Heart right ventricle (tissue), 16 donors: ENCODE measurements at regions of chr15 and their contacts with region 1.

Region 1: GRCh38 chr15:36501063-36501678 is 78.3 kb upstream of the CDIN1 start:
- DNase-seq: peak in 1 of 2 donors; percentile 60
- ATAC-seq: peak; percentile 85 to 96 (median 92)
- H3K4me3 ChIP-seq: peak overlapping the region in 1 of 10 donors; percentile 3
- H3K27ac ChIP-seq: peak overlapping the region in 3 of 10 donors; percentile 0 to 21 (median 4)
- H3K4me1 ChIP-seq: peaks cover 0 to 41% (median 6%) of the 10 kb centered on the region in 9 donors
- H3K27me3 ChIP-seq: no peaks in the 10 kb centered on the region
- CTCF ChIP-seq: peak; percentile 44 to 89 (median 71)

Region 2: GRCh38 chr15:35751413-35752133 is 749.6 kb before region 1 on chr15:
- intact Hi-C with region 1: loop called in 2 of 10 experiments (anchors 10 kb)
- DNase-seq: peak; percentile 25 to 80
- ATAC-seq: peak; percentile 55 to 94 (median 87)
- H3K4me3 ChIP-seq: peak overlapping the region in 2 of 10 donors; percentile 8 to 14
- H3K27ac ChIP-seq: no peak overlapping the region
- H3K4me1 ChIP-seq: peaks cover 0 to 12% (median 2%) of the 10 kb centered on the region in 9 donors
- H3K27me3 ChIP-seq: no peaks in the 10 kb centered on the region
- CTCF ChIP-seq: peak; percentile 59 to 88 (median 81)

Region 3: GRCh38 chr15:36601497-36601932 is 100.3 kb after region 1 on chr15:
- intact Hi-C with region 1: loop called in 1 of 10 experiments (anchors 5 kb)
- DNase-seq: peak in 1 of 2 donors; percentile 77
- ATAC-seq: peak; percentile 87 to 92 (median 90)
- H3K4me3 ChIP-seq: peak overlapping the region in 3 of 10 donors; percentile 6 to 11 (median 10)
- H3K27ac ChIP-seq: peak overlapping the region; percentile 59 to 94 (median 88)
- H3K4me1 ChIP-seq: peaks cover 0 to 61% (median 24%) of the 10 kb centered on the region in 9 donors
- H3K27me3 ChIP-seq: no peaks in the 10 kb centered on the region
- CTCF ChIP-seq: no peak

Region 4: DNA sequence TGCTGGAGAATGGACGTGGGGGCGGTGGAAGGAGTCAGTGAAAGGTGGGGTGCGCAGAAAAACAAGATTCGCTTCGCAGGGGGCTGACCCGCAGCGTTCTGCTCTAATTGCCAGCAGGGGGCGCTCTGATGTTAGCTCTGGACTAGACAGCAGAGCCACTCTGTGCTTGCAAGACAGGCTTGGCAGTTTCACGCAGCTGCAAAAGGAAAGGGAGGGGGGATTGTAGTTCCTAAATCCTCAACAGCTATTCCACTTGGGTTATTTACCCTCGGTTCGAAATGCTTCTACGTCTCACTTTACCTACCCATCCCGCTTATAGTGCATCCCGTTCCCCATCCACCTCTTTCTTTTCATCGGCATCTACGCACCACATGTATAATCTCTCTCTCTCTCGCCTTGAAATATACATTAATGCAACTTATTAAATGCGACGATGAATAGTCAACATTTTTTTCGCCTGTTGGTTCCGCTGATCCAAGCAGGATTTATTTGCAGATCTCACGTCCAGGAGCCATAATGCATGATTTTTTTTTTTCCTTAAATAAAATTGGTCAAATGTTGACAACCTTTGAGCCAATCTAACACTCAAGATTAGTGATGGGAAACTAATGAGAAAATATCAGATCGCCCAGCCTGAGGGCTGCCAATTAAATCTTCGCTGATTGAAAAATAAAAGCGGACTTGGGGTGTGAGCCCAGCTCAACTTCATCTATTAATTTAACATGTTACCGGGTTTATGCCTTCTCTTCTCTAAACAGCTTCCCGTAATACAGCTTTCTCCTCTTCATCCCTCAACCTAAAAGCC is 382.7 kb after region 1 on chr15:
- intact Hi-C with region 1: loop called in 2 of 10 experiments (anchors 10 kb)
- DNase-seq: peak; percentile 87 to 88
- ATAC-seq: peak; percentile 85 to 96 (median 91)
- H3K4me3 ChIP-seq: peak overlapping the region in 9 of 10 donors; percentile 21 to 53 (median 40)
- H3K27ac ChIP-seq: no peak overlapping the region
- H3K4me1 ChIP-seq: peaks cover 0 to 29% (median 4%) of the 10 kb centered on the region in 9 donors
- H3K27me3 ChIP-seq: peaks cover 0 to 100% (median 66%) of the 10 kb centered on the region in 7 donors
- CTCF ChIP-seq: peak; percentile 76 to 88 (median 84)

Region 5: DNA sequence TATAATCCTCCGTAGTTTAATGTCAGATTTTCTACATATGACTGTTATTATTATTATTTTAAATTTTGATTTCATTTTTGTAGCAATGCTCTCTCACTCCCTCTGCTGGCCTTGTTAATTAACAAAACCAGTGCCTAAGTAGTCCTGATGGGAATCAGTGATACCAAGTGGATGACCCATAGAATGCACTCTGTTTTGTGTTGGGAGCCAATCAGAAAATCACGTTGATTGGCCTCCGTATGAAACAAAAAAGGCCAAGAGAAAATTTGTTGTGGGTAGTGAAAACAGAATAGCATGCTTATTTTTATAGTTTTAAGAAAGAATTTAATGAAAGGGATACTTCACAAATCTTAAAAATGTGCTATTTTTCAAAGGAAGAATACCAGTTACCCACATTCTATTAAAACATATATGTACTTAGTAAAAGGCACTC is 633.5 kb after region 1 on chr15:
- intact Hi-C with region 1: loop called in 4 of 10 experiments (anchors 10 kb)
- DNase-seq: no peak
- ATAC-seq: peak in 2 of 8 donors; percentile 65 to 71
- H3K4me3 ChIP-seq: no peak overlapping the region
- H3K27ac ChIP-seq: no peak overlapping the region
- H3K4me1 ChIP-seq: peaks cover 0 to 5% (median 0%) of the 10 kb centered on the region in 9 donors
- H3K27me3 ChIP-seq: peaks cover 0 to 3% (median 0%) of the 10 kb centered on the region in 7 donors
- CTCF ChIP-seq: peak; percentile 7 to 80 (median 68)